ENCODE measurements at regions of chr12 and their contacts with region 1.

Region 1: GRCh38 chr12:95953000-95953399 is 9.9 kb downstream of the AMDHD1 start:
- DNase-seq: no peak
- H3K4me3 ChIP-seq: no peak overlapping the region
- CTCF ChIP-seq: no peak

Region 2: DNA sequence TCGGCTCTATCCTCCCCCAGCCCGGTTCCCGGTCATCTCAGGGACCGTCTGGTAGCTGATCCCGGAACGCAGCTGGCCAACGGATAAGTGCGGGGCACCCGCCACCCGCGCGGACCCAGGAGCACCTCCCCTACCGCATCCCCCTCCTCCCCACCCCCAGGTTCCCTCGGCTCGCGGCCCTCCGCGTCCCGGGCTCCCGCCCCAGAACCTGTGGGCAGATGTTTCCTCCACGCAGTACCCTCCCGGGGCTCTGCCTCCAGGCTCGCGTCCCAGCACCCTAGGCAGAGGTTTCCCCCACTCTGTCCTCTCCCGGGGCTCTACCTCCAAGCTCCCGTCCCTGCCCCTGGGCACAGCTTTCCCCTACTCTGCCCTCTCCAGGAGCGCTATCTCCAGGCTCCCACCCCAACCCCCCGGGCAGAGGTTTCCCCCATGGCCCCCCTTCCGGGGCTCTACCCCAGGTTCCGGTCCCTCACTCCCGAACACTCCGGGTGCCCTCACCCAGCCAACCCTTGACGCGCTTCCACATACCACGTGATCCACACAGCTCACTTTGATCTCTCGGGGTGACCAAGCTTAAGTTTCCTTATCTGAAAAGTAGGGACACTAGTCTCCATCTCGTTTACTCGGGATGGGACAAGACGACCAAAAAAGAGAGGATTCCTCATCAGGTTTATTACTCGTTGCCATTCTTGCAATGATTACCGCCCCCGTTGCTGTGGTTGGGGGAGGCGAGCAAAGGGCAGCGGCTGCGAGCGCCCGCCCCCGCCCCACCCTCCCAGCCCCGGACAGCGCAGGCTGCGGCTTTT is 10.3 kb before region 1 on chr12 and contains the start of gene CCDC38:
- CTCF ChIA-PET with region 1: interaction called, 11 read pairs
- POLR2A ChIA-PET with region 1: no interaction called
- DNase-seq: no peak
- H3K4me3 ChIP-seq: peak within 1 kb of the TSS; percentile 71
- CTCF ChIP-seq: no peak

Measured in AG04449 (cell line).